GM12878 (cell line): ENCODE measurements at regions of chr14 and their contacts with region 1.

Region 1: DNA sequence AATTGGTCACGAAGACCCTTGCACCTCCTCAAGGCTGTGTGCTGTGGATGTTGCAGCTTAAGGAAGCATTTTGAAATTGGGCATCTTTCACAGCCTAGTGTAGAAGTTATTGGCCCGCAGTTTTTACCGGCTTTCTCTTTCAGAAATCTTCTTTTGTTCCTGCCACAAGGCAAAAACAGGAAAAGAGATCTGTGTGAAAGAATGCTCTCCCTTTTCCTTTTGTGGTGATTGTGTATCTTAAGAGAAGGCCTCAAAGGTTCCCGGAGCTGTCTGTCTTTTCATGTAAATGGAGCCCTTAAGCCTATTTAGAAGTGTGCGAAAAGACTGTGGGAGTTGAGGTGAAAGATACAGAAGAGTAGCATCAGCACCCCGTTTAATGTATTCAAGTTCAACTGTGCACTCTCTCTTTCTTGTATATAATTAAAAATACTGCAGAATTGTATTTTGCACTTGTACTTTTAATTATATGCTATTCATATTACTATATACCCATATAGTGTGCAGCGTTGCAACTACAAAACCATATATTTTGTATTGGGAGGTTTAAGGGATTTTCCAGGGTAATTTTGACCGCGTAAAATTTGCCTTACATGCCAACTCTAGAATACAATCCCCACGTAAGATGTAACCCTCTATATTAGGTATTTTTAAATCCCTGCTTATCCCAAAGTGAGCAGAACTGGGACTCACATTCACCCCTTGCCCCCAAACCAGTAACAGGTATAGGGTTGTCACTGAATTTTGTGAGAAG is 441.7 kb downstream of the RAD51B start:
- DNase-seq: no peak
- ATAC-seq: peak; percentile 60
- H3K4me3 ChIP-seq: peak overlapping the region; percentile 40; the same call in 1 of the 2 replicates
- H3K27ac ChIP-seq: peak overlapping the region; percentile 58
- H3K4me1 ChIP-seq: peaks cover 45% of the 10 kb centered on the region
- H3K27me3 ChIP-seq: no peaks in the 10 kb centered on the region
- CTCF ChIP-seq: no peak
- EP300 ChIP-seq: no peak
- POLR2A ChIP-seq: no peak
- RAD21 ChIP-seq: no peak

Region 2: GRCh38 chr14:68199554-68200151 is 61.6 kb before region 1 on chr14:
- CTCF ChIA-PET with region 1: no interaction called
- POLR2A ChIA-PET with region 1: no interaction called
- RAD21 ChIA-PET with region 1: no interaction called
- SMC1A ChIA-PET with region 1: no interaction called
- in situ Hi-C with region 1: no loop called
- intact Hi-C with region 1: no loop called
- DNase-seq: no peak
- ATAC-seq: no peak
- H3K4me3 ChIP-seq: no peak overlapping the region
- H3K27ac ChIP-seq: no peak overlapping the region
- H3K4me1 ChIP-seq: no peaks in the 10 kb centered on the region
- H3K27me3 ChIP-seq: no peaks in the 10 kb centered on the region
- CTCF ChIP-seq: no peak
- EP300 ChIP-seq: no peak
- POLR2A ChIP-seq: no peak
- RAD21 ChIP-seq: no peak

Region 3: GRCh38 chr14:68274725-68275124 is 13.5 kb after region 1 on chr14:
- CTCF ChIA-PET with region 1: interaction called, 6 read pairs
- POLR2A ChIA-PET with region 1: interaction called, 8 read pairs
- RAD21 ChIA-PET with region 1: interaction called, 240 read pairs
- SMC1A ChIA-PET with region 1: interaction called, 237 read pairs
- in situ Hi-C with region 1: no loop called
- intact Hi-C with region 1: no loop called
- DNase-seq: no peak
- ATAC-seq: no peak
- H3K4me3 ChIP-seq: no peak overlapping the region
- H3K27ac ChIP-seq: peak overlapping the region; percentile 91
- H3K4me1 ChIP-seq: peaks cover 78% of the 10 kb centered on the region
- H3K27me3 ChIP-seq: no peaks in the 10 kb centered on the region
- CTCF ChIP-seq: peak in 1 of 3 experiments; percentile 22; a peak in 1 of 6 replicates
- EP300 ChIP-seq: no peak
- POLR2A ChIP-seq: no peak
- RAD21 ChIP-seq: 0 out of 2 replicates have a peak, but pooled peaks have one; percentile 21

Region 4: GRCh38 chr14:69129264-69129880 is 868.1 kb after region 1 on chr14:
- CTCF ChIA-PET with region 1: no interaction called
- POLR2A ChIA-PET with region 1: no interaction called
- RAD21 ChIA-PET with region 1: no interaction called
- SMC1A ChIA-PET with region 1: no interaction called
- in situ Hi-C with region 1: no loop called
- intact Hi-C with region 1: no loop called
- DNase-seq: no peak
- ATAC-seq: peak; percentile 97
- H3K4me3 ChIP-seq: no peak overlapping the region
- H3K27ac ChIP-seq: no peak overlapping the region
- H3K4me1 ChIP-seq: peaks cover 8% of the 10 kb centered on the region; the same call in 1 of the 2 replicates
- H3K27me3 ChIP-seq: no peaks in the 10 kb centered on the region
- CTCF ChIP-seq: peak; percentile 91 to 98 (median 93)
- EP300 ChIP-seq: no peak
- POLR2A ChIP-seq: no peak
- RAD21 ChIP-seq: peak; percentile 92